ENCODE measurements at regions of chr22 and their contacts with region 1.

Region 1: GRCh38 chr22:29689880-29690213 is 30.0 kb upstream of the CABP7 start:
- DNase-seq: peak; percentile 79
- H3K4me3 ChIP-seq: peak overlapping the region in 1 of 2 experiments; percentile 49; a peak in 1 of 4 replicates
- H3K27ac ChIP-seq: no peak overlapping the region
- H3K4me1 ChIP-seq: peaks cover 15 to 43% of the 10 kb centered on the region in 2 experiments
- H3K27me3 ChIP-seq: no peaks in the 10 kb centered on the region
- CTCF ChIP-seq: peak; percentile 82
- EP300 ChIP-seq: no peak
- RAD21 ChIP-seq: peak; percentile 87

Region 2: GRCh38 chr22:29457730-29458129 is 232.1 kb before region 1 on chr22:
- CTCF ChIA-PET with region 1: no interaction called
- POLR2A ChIA-PET with region 1: no interaction called
- DNase-seq: peak; percentile 78
- H3K4me3 ChIP-seq: no peak overlapping the region
- H3K27ac ChIP-seq: no peak overlapping the region
- H3K4me1 ChIP-seq: peaks cover 0 to 4% of the 10 kb centered on the region in 2 experiments; a peak in 1 of 4 replicates
- H3K27me3 ChIP-seq: no peaks in the 10 kb centered on the region
- CTCF ChIP-seq: no peak
- EP300 ChIP-seq: no peak
- RAD21 ChIP-seq: no peak

Region 3: DNA sequence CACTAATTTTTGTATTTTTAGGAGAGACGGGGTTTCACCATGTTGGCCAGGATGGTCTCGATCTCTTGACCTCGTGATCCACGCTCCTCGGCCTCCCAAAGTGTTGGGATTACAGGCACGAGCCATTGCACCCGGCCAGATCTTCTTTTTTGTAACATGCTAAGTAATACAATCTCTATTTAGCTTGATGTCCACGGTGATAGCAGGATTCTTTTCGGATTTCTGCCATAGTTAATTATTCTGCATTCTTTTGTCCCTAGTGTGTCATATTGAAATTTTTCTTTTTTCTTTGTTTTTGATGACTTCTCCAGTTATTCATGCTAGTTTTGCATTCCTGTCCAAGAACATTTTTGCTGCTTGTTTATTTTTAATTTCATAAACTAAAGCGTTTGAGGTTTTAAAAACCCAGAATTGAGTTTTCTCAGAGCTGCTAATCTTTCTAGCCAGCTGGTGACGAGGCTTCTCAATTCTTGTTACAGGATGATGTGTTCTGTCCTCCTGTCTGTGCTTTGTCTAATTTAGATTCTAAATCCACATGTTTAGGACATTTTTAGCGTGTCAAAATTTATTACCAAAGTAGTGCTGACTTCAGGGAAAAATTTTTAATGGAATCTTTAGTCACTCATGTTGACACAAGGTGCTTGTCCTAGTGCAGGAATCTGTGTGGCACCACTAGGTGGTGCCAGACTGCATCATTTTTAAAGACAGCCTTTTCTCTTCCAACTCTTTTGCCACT is 64.6 kb before region 1 on chr22:
- CTCF ChIA-PET with region 1: interaction called, 15 read pairs
- POLR2A ChIA-PET with region 1: no interaction called
- DNase-seq: peak; percentile 49
- H3K4me3 ChIP-seq: peak overlapping the region in 1 of 2 experiments; percentile 15; a peak in 1 of 4 replicates
- H3K27ac ChIP-seq: peak overlapping the region; percentile 24 to 93; a peak in 3 of 4 replicates
- H3K4me1 ChIP-seq: peaks cover 5 to 59% of the 10 kb centered on the region in 2 experiments; a peak in 3 of 4 replicates
- H3K27me3 ChIP-seq: no peaks in the 10 kb centered on the region
- CTCF ChIP-seq: peak; percentile 96
- EP300 ChIP-seq: no peak
- RAD21 ChIP-seq: peak; percentile 71

Region 4: GRCh38 chr22:29641042-29641699 is 48.7 kb before region 1 on chr22:
- CTCF ChIA-PET with region 1: interaction called, 17 read pairs
- POLR2A ChIA-PET with region 1: no interaction called
- DNase-seq: no peak
- H3K4me3 ChIP-seq: no peak overlapping the region
- H3K27ac ChIP-seq: no peak overlapping the region
- H3K4me1 ChIP-seq: peaks cover 4 to 5% of the 10 kb centered on the region in 2 experiments; a peak in 2 of 4 replicates
- H3K27me3 ChIP-seq: no peaks in the 10 kb centered on the region
- CTCF ChIP-seq: no peak
- EP300 ChIP-seq: no peak
- RAD21 ChIP-seq: no peak

Region 5: GRCh38 chr22:29670626-29671025 is 19.2 kb before region 1 on chr22:
- CTCF ChIA-PET with region 1: interaction called, 10 read pairs
- POLR2A ChIA-PET with region 1: interaction called, 3 read pairs
- DNase-seq: no peak
- H3K4me3 ChIP-seq: no peak overlapping the region
- H3K27ac ChIP-seq: no peak overlapping the region
- H3K4me1 ChIP-seq: no peaks in the 10 kb centered on the region
- H3K27me3 ChIP-seq: no peaks in the 10 kb centered on the region
- CTCF ChIP-seq: no peak
- EP300 ChIP-seq: no peak
- RAD21 ChIP-seq: no peak

Region 6: GRCh38 chr22:29701155-29701999 is 11.5 kb after region 1 on chr22:
- CTCF ChIA-PET with region 1: interaction called, 25 read pairs
- POLR2A ChIA-PET with region 1: interaction called, 3 read pairs
- DNase-seq: peak; percentile 64
- H3K4me3 ChIP-seq: no peak overlapping the region
- H3K27ac ChIP-seq: peak overlapping the region in 1 of 2 experiments; percentile 69; a peak in 2 of 4 replicates
- H3K4me1 ChIP-seq: peaks cover 12 to 86% of the 10 kb centered on the region in 2 experiments; a peak in 2 of 4 replicates
- H3K27me3 ChIP-seq: no peaks in the 10 kb centered on the region
- CTCF ChIP-seq: peak; percentile 12; the same call in 1 of the 2 replicates
- EP300 ChIP-seq: peak in 1 of 2 experiments; percentile 25; a peak in 1 of 4 replicates
- RAD21 ChIP-seq: 0 out of 2 replicates have a peak, but pooled peaks have one; percentile 10

Region 7: GRCh38 chr22:29716814-29717545 is 27.1 kb after region 1 on chr22:
- CTCF ChIA-PET with region 1: interaction called, 34 read pairs
- POLR2A ChIA-PET with region 1: interaction called, 5 read pairs
- DNase-seq: no peak
- H3K4me3 ChIP-seq: no peak overlapping the region
- H3K27ac ChIP-seq: no peak overlapping the region
- H3K4me1 ChIP-seq: peaks cover 0 to 62% of the 10 kb centered on the region in 2 experiments; a peak in 1 of 4 replicates
- H3K27me3 ChIP-seq: peaks cover 18% of the 10 kb centered on the region; the same call in 1 of the 2 replicates
- CTCF ChIP-seq: no peak
- EP300 ChIP-seq: no peak
- RAD21 ChIP-seq: no peak

Region 8: GRCh38 chr22:29733362-29734201 is 43.7 kb after region 1 on chr22:
- CTCF ChIA-PET with region 1: interaction called, 20 read pairs
- POLR2A ChIA-PET with region 1: interaction called, 4 read pairs
- DNase-seq: peak; percentile 83
- H3K4me3 ChIP-seq: no peak overlapping the region
- H3K27ac ChIP-seq: peak overlapping the region in 1 of 2 experiments; percentile 78; a peak in 2 of 4 replicates
- H3K4me1 ChIP-seq: peaks cover 0 to 30% of the 10 kb centered on the region in 2 experiments; a peak in 1 of 4 replicates
- H3K27me3 ChIP-seq: no peaks in the 10 kb centered on the region
- CTCF ChIP-seq: no peak
- EP300 ChIP-seq: 0 out of 4 replicates have a peak, but pooled peaks of 1 of the 2 experiments have one; percentile 8
- RAD21 ChIP-seq: 0 out of 2 replicates have a peak, but pooled peaks have one; percentile 9

Region 9: GRCh38 chr22:29854432-29854831 is 164.6 kb after region 1 on chr22:
- CTCF ChIA-PET with region 1: no interaction called
- POLR2A ChIA-PET with region 1: no interaction called
- DNase-seq: no peak
- H3K4me3 ChIP-seq: no peak overlapping the region
- H3K27ac ChIP-seq: no peak overlapping the region
- H3K4me1 ChIP-seq: peaks cover 0 to 6% of the 10 kb centered on the region in 2 experiments; a peak in 1 of 4 replicates
- H3K27me3 ChIP-seq: no peaks in the 10 kb centered on the region
- CTCF ChIP-seq: no peak
- EP300 ChIP-seq: no peak
- RAD21 ChIP-seq: no peak